ENCODE measurements at regions of chr3 and their contacts with region 1.

Region 1: DNA sequence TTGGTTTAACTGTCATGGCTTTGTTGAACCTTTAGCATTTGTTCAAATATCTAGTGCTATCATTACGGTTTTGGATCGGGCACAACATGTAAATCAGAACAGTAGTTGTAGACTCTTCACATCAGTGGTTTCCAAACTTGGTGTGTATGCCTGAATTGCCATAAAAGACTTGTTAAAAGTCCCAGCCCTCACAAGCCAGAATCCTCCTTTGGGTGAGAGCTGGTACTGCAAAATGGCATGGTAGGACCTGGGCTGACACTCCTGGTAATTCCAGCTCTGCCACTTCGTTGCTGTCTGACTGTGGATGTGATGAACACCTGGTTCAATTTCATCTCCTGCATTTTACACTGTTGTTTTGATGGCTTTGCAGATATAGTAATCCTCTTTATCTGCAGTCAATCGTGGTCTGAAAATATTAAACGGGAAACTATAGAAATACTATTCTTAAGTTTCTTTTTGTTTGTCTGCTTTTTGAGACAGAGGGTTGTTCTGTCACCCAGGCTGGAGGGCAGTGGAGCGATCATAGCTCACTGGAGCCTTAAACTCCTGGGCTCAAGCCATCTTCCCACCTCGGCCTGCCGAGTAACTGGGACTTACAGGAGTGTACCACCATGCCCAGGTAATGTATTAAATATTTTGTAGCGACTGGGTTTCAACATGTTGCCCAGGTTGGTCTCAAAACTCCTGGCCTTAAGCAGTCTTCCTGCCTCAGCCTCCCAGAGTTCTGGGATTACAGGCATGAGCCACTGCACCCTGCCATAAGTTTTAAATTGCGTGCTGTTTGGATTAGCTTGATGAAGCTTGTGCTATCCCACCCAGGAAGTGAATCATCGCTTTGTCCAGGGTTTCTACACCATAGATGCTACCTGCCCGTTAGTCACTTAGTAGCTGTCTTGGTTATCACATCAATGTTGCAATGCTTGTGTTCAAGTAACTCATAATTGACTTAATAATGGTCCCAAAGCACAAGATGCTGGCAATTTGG is 61.6 kb downstream of the RAB7A start:
- DNase-seq: no peak
- ATAC-seq: peak; percentile 86
- H3K4me3 Mint-ChIP-seq: no peak overlapping the region
- H3K27ac Mint-ChIP-seq: peak overlapping the region; percentile 62
- H3K4me1 Mint-ChIP-seq: peaks cover 96% of the 10 kb centered on the region
- H3K27me3 Mint-ChIP-seq: no peaks in the 10 kb centered on the region
- CTCF ChIP-seq: no peak

Region 2: GRCh38 chr3:128395500-128396162 is 391.9 kb before region 1 on chr3:
- CTCF ChIA-PET with region 1: no interaction called
- POLR2A ChIA-PET with region 1: no interaction called
- intact Hi-C with region 1: no loop called
- DNase-seq: no peak
- ATAC-seq: no peak
- H3K4me3 Mint-ChIP-seq: no peak overlapping the region
- H3K27ac Mint-ChIP-seq: no peak overlapping the region
- H3K4me1 Mint-ChIP-seq: no peaks in the 10 kb centered on the region
- H3K27me3 Mint-ChIP-seq: no peaks in the 10 kb centered on the region
- CTCF ChIP-seq: no peak

Region 3: GRCh38 chr3:128804017-128804810 is 16.7 kb after region 1 on chr3:
- CTCF ChIA-PET with region 1: no interaction called
- POLR2A ChIA-PET with region 1: interaction called, 3 read pairs
- intact Hi-C with region 1: loop called (anchors 2 kb)
- DNase-seq: no peak
- ATAC-seq: peak; percentile 94
- H3K4me3 Mint-ChIP-seq: peak overlapping the region; percentile 55
- H3K27ac Mint-ChIP-seq: peak overlapping the region; percentile 83
- H3K4me1 Mint-ChIP-seq: peaks cover 54% of the 10 kb centered on the region
- H3K27me3 Mint-ChIP-seq: no peaks in the 10 kb centered on the region
- CTCF ChIP-seq: no peak

Region 4: GRCh38 chr3:128845778-128846485 is 58.4 kb after region 1 on chr3:
- CTCF ChIA-PET with region 1: no interaction called
- POLR2A ChIA-PET with region 1: no interaction called
- intact Hi-C with region 1: loop called (anchors 2 kb)
- DNase-seq: peak; percentile 72
- ATAC-seq: peak; percentile 87
- H3K4me3 Mint-ChIP-seq: peak overlapping the region; percentile 88
- H3K27ac Mint-ChIP-seq: peak overlapping the region; percentile 36
- H3K4me1 Mint-ChIP-seq: peaks cover 10% of the 10 kb centered on the region
- H3K27me3 Mint-ChIP-seq: no peaks in the 10 kb centered on the region
- CTCF ChIP-seq: no peak

Measured in activated B cell treated with CpG ODN at 0.5 μM for 24 hours (primary cell).